ENCODE measurements at regions of chr9 and their contacts with region 1.

Region 1: DNA sequence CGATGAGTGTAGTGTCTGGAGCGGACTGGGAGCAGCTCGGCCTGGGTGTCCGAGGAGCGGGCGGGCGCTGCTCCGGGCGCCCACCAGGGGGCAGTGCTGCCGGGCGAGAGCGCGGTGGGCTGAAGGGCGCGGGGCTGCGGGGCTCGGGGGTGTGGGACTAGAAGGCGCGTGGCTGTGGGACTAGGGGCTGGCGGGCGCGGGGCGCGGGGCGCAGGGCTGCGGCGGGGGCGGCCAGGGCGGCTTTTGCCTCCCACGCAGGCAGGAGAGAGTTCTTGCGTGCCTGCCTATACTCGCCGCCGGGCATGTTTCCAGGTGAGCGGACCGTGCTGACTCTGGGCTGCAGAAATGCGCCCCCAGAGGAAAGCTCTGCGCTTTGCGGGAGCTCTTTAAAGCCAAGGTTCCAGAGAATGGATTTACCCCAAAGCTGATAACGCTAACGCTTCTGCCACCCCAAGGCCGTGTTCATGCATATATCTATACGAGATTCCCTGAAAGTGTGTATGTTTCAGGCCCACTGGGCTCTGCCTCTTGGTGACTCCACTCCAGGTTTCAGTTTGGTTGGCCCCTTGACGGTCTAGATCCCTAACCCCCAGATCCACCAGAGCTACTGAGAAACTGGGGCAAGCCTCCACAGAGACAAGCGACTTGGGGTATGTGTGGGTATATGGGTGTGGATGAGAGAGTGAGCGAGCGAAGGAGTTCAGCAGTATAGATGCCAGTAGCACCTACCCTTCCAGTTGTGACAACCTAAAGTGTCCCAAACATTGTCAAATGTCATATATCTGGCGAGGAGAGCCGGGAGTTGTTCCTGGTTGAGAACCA is 56.2 kb downstream of the ACER2 start:
- DNase-seq: no peak
- H3K4me3 ChIP-seq: peak overlapping the region; percentile 26
- H3K27me3 ChIP-seq: no peaks in the 10 kb centered on the region; the same call in 1 of the 2 replicates
- CTCF ChIP-seq: peak; percentile 52

Region 2: DNA sequence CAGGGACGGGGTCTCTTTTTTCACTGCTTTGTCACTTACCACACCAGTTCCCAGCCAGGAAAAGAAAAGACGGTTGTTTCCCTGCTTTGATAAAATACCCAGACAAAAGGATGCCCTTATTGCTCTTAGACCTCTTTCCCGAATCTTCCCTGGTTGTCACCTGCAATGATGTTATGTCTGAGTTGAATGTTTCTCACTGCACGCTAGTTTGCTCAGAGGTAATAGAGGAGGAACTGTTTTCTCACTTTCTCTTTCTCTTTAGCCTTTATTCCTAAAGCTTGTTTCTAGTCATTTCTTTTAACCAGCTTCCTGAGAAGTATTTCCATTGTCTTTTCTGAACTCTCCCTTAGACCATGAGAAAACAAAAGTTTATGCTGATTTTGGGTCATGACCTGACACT is 23.2 kb before region 1 on chr9:
- CTCF ChIA-PET with region 1: interaction called, 11 read pairs
- POLR2A ChIA-PET with region 1: no interaction called
- DNase-seq: no peak
- H3K4me3 ChIP-seq: no peak overlapping the region
- H3K27me3 ChIP-seq: no peaks in the 10 kb centered on the region
- CTCF ChIP-seq: no peak

Region 3: GRCh38 chr9:19748278-19749126 is 283.5 kb after region 1 on chr9:
- CTCF ChIA-PET with region 1: no interaction called
- POLR2A ChIA-PET with region 1: no interaction called
- DNase-seq: no peak
- H3K4me3 ChIP-seq: no peak overlapping the region
- H3K27me3 ChIP-seq: no peaks in the 10 kb centered on the region
- CTCF ChIP-seq: no peak

Region 4: DNA sequence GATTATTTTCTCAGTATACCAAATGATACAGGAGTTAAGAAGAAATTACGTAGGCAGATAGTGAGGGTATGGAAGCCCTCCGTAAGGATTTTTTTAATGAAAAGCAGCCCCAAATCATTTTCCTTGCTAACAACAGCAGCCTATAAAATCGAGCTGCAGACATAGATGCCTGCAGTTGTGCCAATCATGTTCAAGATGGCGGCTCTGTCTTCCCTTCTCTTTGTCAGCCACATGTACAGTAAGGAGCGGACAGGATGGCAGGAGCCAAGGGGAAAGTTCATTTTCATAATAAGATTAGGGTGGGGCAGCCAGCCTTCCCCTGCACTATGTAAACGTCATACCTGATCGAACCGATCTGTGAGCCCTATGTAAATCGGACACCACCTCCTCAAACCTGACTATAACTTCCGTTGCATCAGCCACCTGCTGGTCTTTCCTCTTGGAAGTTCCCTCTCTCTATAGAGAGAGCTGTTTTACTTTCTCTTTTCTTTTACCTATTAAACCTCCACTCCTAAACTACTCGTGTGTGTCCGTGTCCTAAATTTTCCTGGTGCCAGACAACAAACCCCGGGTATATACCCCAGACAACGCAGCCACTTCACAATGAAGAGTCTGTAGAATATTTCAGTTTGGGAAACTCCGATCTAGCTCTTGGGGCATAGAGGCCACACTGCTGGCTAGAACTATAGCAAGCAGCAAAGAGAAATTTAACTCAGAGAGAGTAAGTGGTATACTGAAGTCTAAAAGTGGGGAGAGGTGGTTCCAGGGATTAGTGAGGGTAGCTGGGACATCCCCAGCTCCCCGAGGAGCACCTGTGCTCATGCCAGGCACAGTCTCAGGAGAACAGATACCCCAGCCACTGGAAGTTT is 344.7 kb after region 1 on chr9:
- CTCF ChIA-PET with region 1: no interaction called
- POLR2A ChIA-PET with region 1: no interaction called
- DNase-seq: no peak
- H3K4me3 ChIP-seq: no peak overlapping the region
- H3K27me3 ChIP-seq: no peaks in the 10 kb centered on the region
- CTCF ChIP-seq: no peak

Measured in BJ (cell line).